Activated CD8-positive, alpha-beta T cell treated with anti-CD3 and anti-CD28 coated beads for 36 hours (primary cell): ENCODE measurements at regions of chr12 and their contacts with region 1.

Region 1: DNA sequence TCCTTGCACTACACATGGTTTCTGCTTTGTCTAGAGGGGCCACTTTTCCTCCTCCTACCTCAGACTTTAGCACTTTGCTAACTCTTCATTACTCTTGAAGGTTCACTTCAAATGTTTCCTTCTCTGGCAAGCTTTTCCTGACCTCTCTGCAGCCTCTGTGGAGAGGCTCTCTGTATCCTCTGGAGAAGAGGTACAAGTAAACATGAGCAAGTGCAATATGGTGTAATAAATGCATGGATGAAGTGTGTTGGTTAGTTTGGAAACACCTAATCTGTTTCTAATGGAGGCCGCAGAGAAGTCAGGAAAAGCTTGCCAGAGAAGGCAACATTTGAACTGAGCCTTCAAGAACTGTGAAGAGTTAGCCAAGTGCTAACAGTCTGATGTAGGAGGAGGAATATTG is 329.3 kb downstream of the GRIN2B start:
- DNase-seq: no peak
- ATAC-seq: no peak
- H3K4me3 Mint-ChIP-seq: no peak overlapping the region
- H3K27ac Mint-ChIP-seq: no peak overlapping the region
- H3K4me1 Mint-ChIP-seq: no peaks in the 10 kb centered on the region
- H3K27me3 Mint-ChIP-seq: peaks cover 6% of the 10 kb centered on the region
- CTCF ChIP-seq: no peak

Region 2: DNA sequence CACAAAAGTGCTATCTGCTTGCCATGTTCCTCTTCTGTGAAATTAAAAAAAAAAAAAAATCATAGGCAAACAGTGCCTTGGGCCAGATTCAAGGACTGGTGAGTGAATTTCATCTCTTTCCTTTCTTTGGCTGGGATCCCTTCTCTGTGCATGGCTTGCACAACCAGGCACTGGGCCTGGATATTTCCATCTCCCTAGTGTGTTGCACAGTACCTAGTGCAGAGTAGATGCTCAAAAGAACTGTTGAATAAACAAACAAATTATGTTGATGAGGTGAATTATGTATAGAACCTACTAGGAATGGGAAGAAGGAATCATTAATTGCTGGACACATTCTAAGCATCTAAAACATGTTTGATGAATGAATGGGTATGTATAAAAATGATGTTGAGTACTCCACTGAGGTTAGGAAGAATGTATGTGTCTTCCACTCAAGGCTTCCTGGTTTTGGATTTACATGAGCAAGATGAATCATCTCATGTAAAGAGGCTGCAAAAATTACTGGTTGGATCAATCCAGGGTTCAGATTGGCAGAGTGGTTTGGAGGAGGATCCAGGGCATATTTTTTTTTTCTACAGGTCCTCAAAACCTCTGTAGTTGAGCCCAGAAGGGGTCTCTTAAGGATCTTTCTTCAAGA is 362.3 kb before region 1 on chr12:
- CTCF ChIA-PET with region 1: no interaction called
- POLR2A ChIA-PET with region 1: no interaction called
- intact Hi-C with region 1: loop called (anchors 10 kb)
- DNase-seq: no peak
- ATAC-seq: no peak
- H3K4me3 Mint-ChIP-seq: no peak overlapping the region
- H3K27ac Mint-ChIP-seq: no peak overlapping the region
- H3K4me1 Mint-ChIP-seq: no peaks in the 10 kb centered on the region
- H3K27me3 Mint-ChIP-seq: peaks cover 7% of the 10 kb centered on the region
- CTCF ChIP-seq: no peak

Region 3: GRCh38 chr12:13503094-13503835 is 148.8 kb before region 1 on chr12:
- CTCF ChIA-PET with region 1: no interaction called
- POLR2A ChIA-PET with region 1: no interaction called
- intact Hi-C with region 1: no loop called
- DNase-seq: no peak
- ATAC-seq: no peak
- H3K4me3 Mint-ChIP-seq: no peak overlapping the region
- H3K27ac Mint-ChIP-seq: no peak overlapping the region
- H3K4me1 Mint-ChIP-seq: no peaks in the 10 kb centered on the region
- H3K27me3 Mint-ChIP-seq: peaks cover 4% of the 10 kb centered on the region
- CTCF ChIP-seq: no peak

Region 4: DNA sequence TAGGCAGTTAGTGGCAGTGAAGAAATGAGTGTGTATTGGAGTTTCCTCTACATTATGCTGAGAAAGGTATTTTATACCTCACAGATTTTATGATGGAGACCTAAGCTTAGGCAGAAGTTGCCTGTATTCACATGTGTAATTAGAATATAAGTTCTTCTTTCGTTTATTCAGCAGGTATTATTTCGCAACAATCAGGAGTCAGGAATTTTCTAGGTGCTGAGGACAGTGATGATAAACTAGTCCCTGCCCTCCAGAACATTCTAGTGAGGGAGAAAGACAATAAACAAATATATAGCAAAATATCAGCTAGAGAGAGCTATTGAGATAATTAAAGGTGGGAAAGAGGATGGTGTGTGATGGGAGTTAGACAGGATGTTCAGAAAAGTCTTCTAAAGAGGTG is 16.4 kb before region 1 on chr12:
- CTCF ChIA-PET with region 1: no interaction called
- POLR2A ChIA-PET with region 1: no interaction called
- intact Hi-C with region 1: no loop called
- DNase-seq: no peak
- ATAC-seq: no peak
- H3K4me3 Mint-ChIP-seq: no peak overlapping the region
- H3K27ac Mint-ChIP-seq: no peak overlapping the region
- H3K4me1 Mint-ChIP-seq: no peaks in the 10 kb centered on the region
- H3K27me3 Mint-ChIP-seq: peaks cover 1% of the 10 kb centered on the region
- CTCF ChIP-seq: no peak

Region 5: GRCh38 chr12:13734584-13735152 is 82.6 kb after region 1 on chr12:
- CTCF ChIA-PET with region 1: no interaction called
- POLR2A ChIA-PET with region 1: no interaction called
- intact Hi-C with region 1: no loop called
- DNase-seq: no peak
- ATAC-seq: no peak
- H3K4me3 Mint-ChIP-seq: no peak overlapping the region
- H3K27ac Mint-ChIP-seq: no peak overlapping the region
- H3K4me1 Mint-ChIP-seq: no peaks in the 10 kb centered on the region
- H3K27me3 Mint-ChIP-seq: peaks cover 5% of the 10 kb centered on the region
- CTCF ChIP-seq: no peak